Caco-2 (cell line): ENCODE measurements at regions of chr1 and their contacts with region 1.

Region 1: GRCh38 chr1:158002022-158002630 is 8.7 kb downstream of the KIRREL1 start:
- DNase-seq: peak; percentile 38 to 55
- H3K4me3 ChIP-seq: no peak overlapping the region
- H3K4me3 Mint-ChIP-seq: peak overlapping the region; percentile 30
- H3K27ac Mint-ChIP-seq: peak overlapping the region; percentile 65
- H3K4me1 ChIP-seq: peaks cover 54% of the 10 kb centered on the region
- H3K4me1 Mint-ChIP-seq: peaks cover 38% of the 10 kb centered on the region
- H3K27me3 ChIP-seq: no peaks in the 10 kb centered on the region
- H3K27me3 Mint-ChIP-seq: no peaks in the 10 kb centered on the region
- CTCF ChIP-seq: no peak

Region 2: GRCh38 chr1:158019171-158019868 is 17.2 kb after region 1 on chr1:
- CTCF ChIA-PET with region 1: interaction called, 6 read pairs
- POLR2A ChIA-PET with region 1: interaction called, 6 read pairs
- intact Hi-C with region 1: loop called (anchors 2 kb)
- DNase-seq: peak; percentile 63 to 73
- H3K4me3 ChIP-seq: no peak overlapping the region
- H3K4me3 Mint-ChIP-seq: peak overlapping the region; percentile 21
- H3K27ac Mint-ChIP-seq: peak overlapping the region; percentile 79
- H3K4me1 ChIP-seq: peaks cover 61% of the 10 kb centered on the region
- H3K4me1 Mint-ChIP-seq: peaks cover 53% of the 10 kb centered on the region
- H3K27me3 ChIP-seq: no peaks in the 10 kb centered on the region
- H3K27me3 Mint-ChIP-seq: no peaks in the 10 kb centered on the region
- CTCF ChIP-seq: no peak

Region 3: DNA sequence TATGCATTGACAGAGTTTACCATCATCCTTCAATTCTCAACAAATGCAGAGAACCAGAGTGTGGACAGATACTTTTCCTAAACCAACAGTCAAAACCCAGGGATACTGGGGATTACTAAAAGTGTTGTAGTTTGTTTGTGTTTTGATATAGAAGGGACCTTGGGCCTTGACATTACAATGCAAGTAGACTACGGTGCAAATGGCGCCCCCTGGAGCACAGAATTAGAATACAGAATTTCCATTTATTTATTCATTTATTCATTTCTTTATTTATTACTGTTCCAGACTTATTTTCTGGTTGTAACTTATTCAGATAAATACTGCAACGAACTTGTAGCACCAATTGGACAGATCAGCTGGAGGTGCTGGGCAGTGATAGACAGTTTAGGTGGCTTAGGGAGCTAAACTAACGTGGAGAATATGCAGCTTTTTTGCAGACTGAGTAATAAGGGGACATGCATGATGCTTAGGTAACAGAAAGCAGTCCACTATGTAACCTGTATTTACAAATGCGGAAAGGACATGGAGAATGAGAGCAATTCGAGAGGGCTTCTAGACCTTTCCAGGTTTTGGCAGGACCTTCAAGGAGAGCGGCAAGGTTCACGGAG is 34.0 kb after region 1 on chr1:
- CTCF ChIA-PET with region 1: interaction called, 8 read pairs
- POLR2A ChIA-PET with region 1: no interaction called
- intact Hi-C with region 1: loop called (anchors 2 kb)
- DNase-seq: peak in 1 of 2 experiments; percentile 41
- H3K4me3 ChIP-seq: no peak overlapping the region
- H3K4me3 Mint-ChIP-seq: no peak overlapping the region
- H3K27ac Mint-ChIP-seq: no peak overlapping the region
- H3K4me1 ChIP-seq: peaks cover 6% of the 10 kb centered on the region
- H3K4me1 Mint-ChIP-seq: peaks cover 8% of the 10 kb centered on the region
- H3K27me3 ChIP-seq: no peaks in the 10 kb centered on the region
- H3K27me3 Mint-ChIP-seq: no peaks in the 10 kb centered on the region
- CTCF ChIP-seq: peak; percentile 50 to 81